Right cardiac atrium (tissue), 5 donors: ENCODE measurements at regions of chr15 and their contacts with region 1.

Region 1: GRCh38 chr15:64749999-64750657 is 25.3 kb downstream of the RBPMS2 start:
- DNase-seq: peak; percentile 67 to 80 (median 72)
- ATAC-seq: peak; percentile 59 to 74
- H3K4me3 ChIP-seq: peak overlapping the region; percentile 47
- H3K27ac ChIP-seq: peak overlapping the region; percentile 83
- H3K4me1 ChIP-seq: peaks cover 21% of the 10 kb centered on the region
- H3K27me3 ChIP-seq: no peaks in the 10 kb centered on the region

Region 2: GRCh38 chr15:64634576-64635498 is 115.3 kb before region 1 on chr15:
- intact Hi-C with region 1: no loop called
- DNase-seq: no peak
- ATAC-seq: peak in 1 of 2 donors; percentile 9
- H3K4me3 ChIP-seq: no peak overlapping the region
- H3K27ac ChIP-seq: no peak overlapping the region
- H3K4me1 ChIP-seq: peaks cover 7% of the 10 kb centered on the region
- H3K27me3 ChIP-seq: no peaks in the 10 kb centered on the region

Region 3: DNA sequence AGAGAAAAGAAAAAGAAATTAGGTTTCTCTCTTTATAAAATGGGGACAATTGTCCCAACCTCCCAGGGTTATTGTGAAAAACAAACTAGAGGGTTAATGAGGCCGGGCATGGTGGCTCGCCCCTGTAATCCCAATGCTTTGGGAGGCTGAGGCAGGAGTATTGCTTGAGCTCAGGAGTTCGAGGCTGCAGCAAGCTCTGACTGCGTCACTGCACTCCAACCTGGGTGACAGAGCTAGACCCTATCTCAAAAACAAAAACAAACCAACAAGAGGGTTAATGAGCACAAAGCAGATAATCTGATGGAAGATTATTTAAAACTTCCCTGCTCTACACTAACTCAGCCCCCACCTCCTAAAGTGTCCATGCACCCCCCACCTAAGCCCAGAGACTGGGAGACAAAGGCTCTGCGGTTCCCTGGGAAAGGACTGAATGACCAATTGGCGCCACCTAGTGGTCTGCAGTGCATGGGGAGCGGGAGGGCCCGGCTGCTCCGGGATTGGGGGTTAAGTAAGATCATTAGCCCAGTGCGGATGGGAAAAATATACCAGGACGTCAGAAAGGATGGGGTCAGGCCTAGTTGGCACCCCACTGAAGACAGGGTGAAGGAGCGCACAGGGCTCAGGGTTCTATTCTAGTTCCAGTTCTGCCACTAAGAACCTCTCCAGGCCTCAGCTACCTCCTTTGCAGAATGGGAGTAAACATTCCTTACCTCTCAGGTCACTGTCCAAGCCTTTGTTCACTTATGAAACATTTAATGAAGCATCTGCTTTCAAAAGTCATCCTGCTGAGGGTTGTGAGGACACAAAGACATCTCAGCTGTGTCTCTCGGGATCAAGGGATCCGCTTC is 59.7 kb after region 1 on chr15:
- intact Hi-C with region 1: loop called in 1 of 4 experiments (anchors 5 kb)
- DNase-seq: peak; percentile 85 to 93 (median 91)
- ATAC-seq: peak; percentile 81 to 82
- H3K4me3 ChIP-seq: no peak overlapping the region
- H3K27ac ChIP-seq: no peak overlapping the region
- H3K4me1 ChIP-seq: no peaks in the 10 kb centered on the region
- H3K27me3 ChIP-seq: no peaks in the 10 kb centered on the region